ENCODE measurements at regions of chr4 and their contacts with region 1.

Region 1: GRCh38 chr4:166165829-166166420 is 292.9 kb downstream of the TLL1 start:
- DNase-seq: peak; percentile 71
- H3K4me3 Mint-ChIP-seq: no peak overlapping the region
- H3K27ac Mint-ChIP-seq: no peak overlapping the region
- H3K4me1 Mint-ChIP-seq: no peaks in the 10 kb centered on the region
- H3K27me3 Mint-ChIP-seq: no peaks in the 10 kb centered on the region

Region 2: GRCh38 chr4:166252487-166253402 is 86.8 kb after region 1 on chr4:
- intact Hi-C with region 1: loop called (anchors 5 kb)
- DNase-seq: no peak
- H3K4me3 Mint-ChIP-seq: no peak overlapping the region
- H3K27ac Mint-ChIP-seq: no peak overlapping the region
- H3K4me1 Mint-ChIP-seq: no peaks in the 10 kb centered on the region
- H3K27me3 Mint-ChIP-seq: no peaks in the 10 kb centered on the region

Region 3: GRCh38 chr4:167622481-167623246 is 1456.7 kb after region 1 on chr4:
- intact Hi-C with region 1: loop called (anchors 1 kb)
- DNase-seq: peak; percentile 77
- H3K4me3 Mint-ChIP-seq: no peak overlapping the region
- H3K27ac Mint-ChIP-seq: no peak overlapping the region
- H3K4me1 Mint-ChIP-seq: no peaks in the 10 kb centered on the region
- H3K27me3 Mint-ChIP-seq: no peaks in the 10 kb centered on the region

Region 4: DNA sequence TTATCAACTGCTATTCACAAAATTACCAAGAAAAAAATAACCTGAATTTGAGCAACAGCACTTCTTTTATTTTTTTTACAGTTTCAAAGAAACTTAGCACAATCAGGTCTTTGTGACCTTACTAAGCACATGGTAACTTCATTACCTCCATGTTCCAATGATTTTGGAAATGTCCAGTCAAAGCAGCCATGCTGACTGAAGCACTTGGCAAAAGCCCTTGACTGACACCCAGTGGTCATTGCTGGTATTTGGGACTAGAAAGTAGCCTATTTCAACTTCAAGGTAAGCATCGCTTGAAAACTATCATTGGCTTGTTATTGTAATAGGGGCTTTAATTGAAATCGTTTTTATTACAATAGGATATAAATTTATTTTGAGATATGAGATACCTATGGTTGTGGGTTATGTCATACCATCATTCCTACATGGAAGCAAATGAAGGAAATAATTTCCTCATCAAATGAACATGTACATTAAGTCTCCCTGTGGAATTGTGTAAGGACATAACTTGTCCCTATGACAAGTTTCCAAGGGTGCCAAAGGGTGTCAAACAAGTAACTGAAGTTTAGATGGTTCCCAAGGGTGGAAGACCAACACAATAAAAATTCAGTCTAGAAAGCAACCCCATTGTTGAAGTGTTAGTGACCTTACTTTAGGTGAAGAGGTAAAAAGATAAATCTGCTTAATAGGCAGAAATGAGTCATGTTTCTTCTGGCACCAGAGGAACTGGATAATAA is 1911.2 kb after region 1 on chr4:
- intact Hi-C with region 1: loop called (anchors 5 kb)
- DNase-seq: peak; percentile 78
- H3K4me3 Mint-ChIP-seq: no peak overlapping the region
- H3K27ac Mint-ChIP-seq: no peak overlapping the region
- H3K4me1 Mint-ChIP-seq: no peaks in the 10 kb centered on the region
- H3K27me3 Mint-ChIP-seq: no peaks in the 10 kb centered on the region